ENCODE measurements at regions of chr13 and their contacts with region 1.

Region 1: GRCh38 chr13:29771247-29771646 is 79.2 kb downstream of the UBL3 start:
- DNase-seq: no peak
- ATAC-seq: no peak

Region 2: GRCh38 chr13:29621051-29621757 is 150.0 kb before region 1 on chr13:
- intact Hi-C with region 1: no loop called
- DNase-seq: no peak
- ATAC-seq: no peak

Region 3: GRCh38 chr13:29648760-29649159 is 122.5 kb before region 1 on chr13:
- intact Hi-C with region 1: no loop called
- DNase-seq: no peak
- ATAC-seq: no peak

Region 4: DNA sequence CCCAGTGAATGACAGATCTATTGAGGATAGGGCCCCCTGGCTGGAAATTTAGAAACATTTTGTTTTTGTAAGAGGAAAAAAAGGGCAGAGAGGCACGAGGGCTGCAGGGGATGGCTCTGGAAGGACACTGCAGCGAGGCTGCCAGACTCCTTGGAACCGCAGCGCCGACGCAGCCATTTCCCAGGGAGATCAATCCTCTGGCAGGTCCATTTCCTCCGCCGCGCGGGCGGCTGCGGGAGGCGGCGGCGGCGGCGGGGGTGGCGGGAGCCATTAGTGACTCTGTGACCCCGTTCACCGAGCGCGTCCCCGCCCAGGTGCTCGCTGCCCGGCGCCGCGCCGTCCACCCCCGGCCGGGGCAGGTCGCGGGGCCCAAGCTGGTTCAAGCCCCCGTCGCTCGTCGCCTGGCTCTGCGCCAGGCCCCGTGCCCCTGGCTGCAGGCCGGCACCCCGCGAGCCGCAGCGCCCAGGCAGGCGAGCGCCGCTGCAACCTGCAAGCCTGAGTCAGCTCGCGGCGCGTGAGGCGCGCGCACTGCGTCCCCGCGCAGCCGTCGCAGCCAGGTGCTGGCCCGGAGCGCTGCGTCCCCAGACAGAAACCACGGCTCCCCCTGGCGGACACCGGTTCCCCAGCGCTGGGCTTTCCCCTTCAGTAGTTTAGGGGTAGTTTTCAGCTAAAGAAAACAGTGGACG is 343.5 kb after region 1 on chr13:
- intact Hi-C with region 1: loop called (anchors 1 kb)
- DNase-seq: peak; percentile 93
- ATAC-seq: peak; percentile 86